ENCODE measurements at regions of chr11 and their contacts with region 1.

Region 1: GRCh38 chr11:86483940-86484794 is 109.5 kb downstream of the CCDC81 start:
- DNase-seq: peak; percentile 82 to 89
- ATAC-seq: peak; percentile 84
- H3K4me3 ChIP-seq: no peak overlapping the region
- H3K27ac ChIP-seq: peak overlapping the region; percentile 44 to 64
- H3K4me1 ChIP-seq: peaks cover 2 to 8% of the 10 kb centered on the region in 2 donors
- H3K27me3 ChIP-seq: no peaks in the 10 kb centered on the region

Region 2: DNA sequence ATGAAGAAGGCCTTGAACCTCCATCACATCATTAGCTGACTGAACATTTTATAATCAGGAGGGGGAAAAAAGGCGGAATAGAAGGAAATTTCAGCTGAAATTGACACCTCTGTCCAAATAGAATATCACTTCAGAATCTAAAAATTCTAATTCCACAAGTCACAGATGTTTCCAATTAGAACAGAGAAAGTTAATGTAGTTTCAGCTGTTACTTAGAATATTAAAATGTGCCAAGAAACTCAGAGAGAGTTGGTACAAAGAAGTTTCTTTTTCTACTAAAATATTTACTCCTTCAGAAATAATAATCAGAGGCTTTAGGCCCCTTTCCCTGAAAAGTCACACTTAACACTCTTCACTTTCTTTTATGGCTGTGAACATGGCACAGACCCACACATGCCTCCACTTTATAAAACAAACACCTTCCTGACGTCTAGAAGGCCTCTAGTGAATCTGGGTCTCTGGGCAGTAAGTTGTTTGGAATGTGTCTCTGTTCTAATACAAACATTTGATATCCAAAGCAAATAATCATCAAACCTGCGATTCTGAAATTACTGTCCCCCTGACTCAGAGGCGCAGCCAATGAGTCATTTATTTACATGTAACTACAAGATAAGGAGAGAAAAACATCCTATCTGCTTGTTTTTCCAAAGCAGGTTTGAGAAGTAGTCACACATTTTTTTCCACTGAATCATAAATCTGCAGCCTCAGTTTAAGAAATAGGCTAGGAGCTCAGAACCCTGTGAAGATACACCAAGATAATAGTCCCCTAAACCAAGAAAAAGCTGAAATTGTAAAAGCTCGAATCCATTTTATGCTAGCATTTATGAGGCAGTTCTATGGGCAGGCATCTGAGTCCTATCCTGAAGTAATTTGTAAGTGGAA is 39.8 kb after region 1 on chr11:
- intact Hi-C with region 1: loop called (anchors 5 kb)
- DNase-seq: no peak
- ATAC-seq: peak; percentile 64
- H3K4me3 ChIP-seq: no peak overlapping the region
- H3K27ac ChIP-seq: peak overlapping the region in 1 of 2 donors; percentile 18
- H3K4me1 ChIP-seq: peaks cover 5 to 10% of the 10 kb centered on the region in 2 donors
- H3K27me3 ChIP-seq: no peaks in the 10 kb centered on the region

Region 3: GRCh38 chr11:87384078-87384729 is 900.0 kb after region 1 on chr11:
- intact Hi-C with region 1: no loop called
- DNase-seq: no peak
- ATAC-seq: no peak
- H3K4me3 ChIP-seq: no peak overlapping the region
- H3K27ac ChIP-seq: no peak overlapping the region
- H3K4me1 ChIP-seq: no peaks in the 10 kb centered on the region
- H3K27me3 ChIP-seq: no peaks in the 10 kb centered on the region

Measured in aorta (tissue), 5 donors.